ENCODE measurements at regions of chr4 and their contacts with region 1.

Region 1: GRCh38 chr4:142846729-142847596 is 862 bp upstream of the INPP4B start:
- DNase-seq: peak; percentile 39 to 81 (median 75)
- ATAC-seq: peak; percentile 89
- H3K4me3 ChIP-seq: peak overlapping the region; percentile 86
- H3K4me3 Mint-ChIP-seq: peak overlapping the region; percentile 85 to 94 (median 92)
- H3K27ac ChIP-seq: peak overlapping the region; percentile 54
- H3K27ac Mint-ChIP-seq: peak overlapping the region in 5 of 9 donors; percentile 26 to 76 (median 56)
- H3K4me1 ChIP-seq: peaks cover 5 to 7% of the 10 kb centered on the region in 2 donors
- H3K4me1 Mint-ChIP-seq: peaks cover 10 to 28% (median 16%) of the 10 kb centered on the region in 7 donors
- H3K27me3 ChIP-seq: peaks cover 0 to 4% of the 10 kb centered on the region in 2 donors
- H3K27me3 Mint-ChIP-seq: peaks cover 5 to 26% (median 22%) of the 10 kb centered on the region in 5 donors

Region 2: GRCh38 chr4:141158219-141158618 is 1688.7 kb before region 1 on chr4:
- CTCF ChIA-PET with region 1: no interaction called
- POLR2A ChIA-PET with region 1: no interaction called
- intact Hi-C with region 1: loop called in 1 of 2 experiments (anchors 2 kb)
- DNase-seq: peak in 1 of 9 donors; percentile 11
- ATAC-seq: no peak
- H3K4me3 ChIP-seq: no peak overlapping the region
- H3K4me3 Mint-ChIP-seq: no peak overlapping the region
- H3K27ac ChIP-seq: no peak overlapping the region
- H3K27ac Mint-ChIP-seq: no peak overlapping the region
- H3K4me1 ChIP-seq: no peaks in the 10 kb centered on the region
- H3K4me1 Mint-ChIP-seq: no peaks in the 10 kb centered on the region
- H3K27me3 ChIP-seq: no peaks in the 10 kb centered on the region
- H3K27me3 Mint-ChIP-seq: peaks cover 5 to 20% (median 13%) of the 10 kb centered on the region in 5 donors

Region 3: DNA sequence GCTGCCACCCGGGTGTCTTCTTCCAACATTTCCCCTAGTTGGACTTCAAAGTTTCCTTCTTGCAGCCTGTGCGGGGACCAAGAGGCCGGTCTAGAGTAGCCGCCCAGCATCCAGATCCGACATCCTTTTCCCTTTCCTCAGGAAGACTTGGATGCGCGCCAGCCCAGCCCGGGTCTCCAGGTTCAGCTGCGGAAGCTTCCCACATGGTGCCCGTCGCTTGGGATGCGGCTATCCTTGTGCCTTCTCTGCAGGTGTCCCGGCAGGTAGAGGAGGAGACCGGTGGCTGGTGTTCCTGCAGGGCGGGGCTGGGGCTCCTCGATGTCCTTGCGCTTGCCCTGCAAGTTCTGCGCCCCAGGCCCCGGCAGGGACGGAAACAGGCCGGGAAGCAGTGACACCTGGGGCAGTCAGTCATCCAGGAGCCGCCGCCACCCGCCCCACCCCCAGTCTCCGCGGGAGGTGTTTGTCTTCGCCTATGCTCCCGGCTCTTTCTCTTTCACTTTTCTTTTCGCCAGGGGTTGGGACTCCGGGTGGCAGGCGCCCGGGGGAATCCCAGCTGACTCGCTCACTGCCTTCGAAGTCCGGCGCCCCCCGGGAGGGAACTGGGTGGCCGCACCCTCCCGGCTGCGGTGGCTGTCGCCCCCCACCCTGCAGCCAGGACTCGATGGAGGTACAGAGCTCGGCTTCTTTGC is 1210.7 kb before region 1 on chr4 and contains the start of gene IL15:
- CTCF ChIA-PET with region 1: no interaction called
- POLR2A ChIA-PET with region 1: no interaction called
- intact Hi-C with region 1: loop called (anchors 5 kb)
- DNase-seq: peak; percentile 4 to 70 (median 20)
- ATAC-seq: peak; percentile 82
- H3K4me3 ChIP-seq: peak within 1 kb of the TSS; percentile 80
- H3K4me3 Mint-ChIP-seq: peak within 1 kb of the TSS; percentile 80 to 98 (median 95)
- H3K27ac ChIP-seq: peak within 1 kb of the TSS; percentile 40
- H3K27ac Mint-ChIP-seq: peak within 1 kb of the TSS in 7 of 9 donors; percentile 7 to 85 (median 69)
- H3K4me1 ChIP-seq: peaks cover 2 to 10% of the 10 kb centered on the region in 2 donors
- H3K4me1 Mint-ChIP-seq: peaks cover 8 to 25% (median 16%) of the 10 kb centered on the region in 7 donors
- H3K27me3 ChIP-seq: no peaks in the 10 kb centered on the region
- H3K27me3 Mint-ChIP-seq: peaks cover 7 to 52% (median 14%) of the 10 kb centered on the region in 5 donors
- total RNA-seq, gene IL15: 0.54 to 8.7 (median 2.7) TPM

Region 4: DNA sequence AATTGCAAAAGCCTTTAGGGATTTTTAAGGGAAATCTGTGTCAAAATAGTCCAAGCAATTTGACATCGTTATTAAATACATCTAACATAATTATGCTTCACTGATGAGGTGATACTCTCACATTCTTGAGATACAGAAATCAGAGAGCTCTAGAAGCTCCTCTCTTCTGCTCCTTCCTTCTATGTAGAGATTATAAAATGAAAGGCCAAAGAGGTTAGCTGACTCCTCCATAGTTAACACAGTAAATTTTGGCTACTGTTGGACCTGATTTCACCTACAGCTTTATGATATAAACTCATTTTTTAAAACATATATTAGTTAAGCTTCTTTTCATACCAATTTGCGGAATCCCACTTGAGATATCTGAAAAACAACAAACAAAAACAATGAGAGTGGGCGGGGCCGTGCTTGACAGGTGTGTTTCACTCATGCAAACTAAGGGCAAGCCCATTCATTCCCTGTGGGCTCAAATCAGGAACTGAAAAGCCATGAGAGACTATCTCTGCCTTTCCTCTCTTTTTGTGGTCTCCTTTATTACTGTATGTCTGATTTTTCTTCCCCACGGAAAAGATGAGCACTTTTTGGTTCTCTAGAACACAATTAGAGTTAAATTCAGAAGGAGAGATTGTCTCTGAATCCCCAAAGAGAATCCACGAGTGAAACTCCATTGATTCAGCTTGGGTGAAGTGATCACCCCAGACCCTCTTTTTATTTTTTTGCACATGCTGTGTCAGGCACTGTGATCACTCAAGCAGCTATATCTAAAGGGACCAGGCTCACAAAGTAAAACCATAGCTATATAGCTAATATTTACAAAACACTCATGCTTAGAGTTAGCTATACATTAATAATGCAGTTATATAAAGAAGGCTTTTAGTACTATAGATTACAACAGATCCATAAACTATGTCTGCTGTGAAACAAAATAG is 644.3 kb before region 1 on chr4:
- CTCF ChIA-PET with region 1: no interaction called
- POLR2A ChIA-PET with region 1: no interaction called
- intact Hi-C with region 1: loop called in 1 of 2 experiments (anchors 10 kb)
- DNase-seq: no peak
- ATAC-seq: no peak
- H3K4me3 ChIP-seq: no peak overlapping the region
- H3K4me3 Mint-ChIP-seq: no peak overlapping the region
- H3K27ac ChIP-seq: no peak overlapping the region
- H3K27ac Mint-ChIP-seq: peak overlapping the region in 2 of 9 donors; percentile 27 to 61
- H3K4me1 ChIP-seq: no peaks in the 10 kb centered on the region
- H3K4me1 Mint-ChIP-seq: peaks cover 0 to 48% (median 32%) of the 10 kb centered on the region in 7 donors
- H3K27me3 ChIP-seq: no peaks in the 10 kb centered on the region
- H3K27me3 Mint-ChIP-seq: no peaks in the 10 kb centered on the region

Region 5: GRCh38 chr4:142719854-142720541 is 127.0 kb before region 1 on chr4:
- CTCF ChIA-PET with region 1: no interaction called
- POLR2A ChIA-PET with region 1: interaction called, 4 read pairs
- intact Hi-C with region 1: loop called (anchors 2 kb)
- DNase-seq: peak in 6 of 9 donors; percentile 22 to 64 (median 58)
- ATAC-seq: peak; percentile 75
- H3K4me3 ChIP-seq: no peak overlapping the region
- H3K4me3 Mint-ChIP-seq: peak overlapping the region in 6 of 10 donors; percentile 16 to 51 (median 37)
- H3K27ac ChIP-seq: peak overlapping the region; percentile 43
- H3K27ac Mint-ChIP-seq: peak overlapping the region in 6 of 9 donors; percentile 43 to 91 (median 68)
- H3K4me1 ChIP-seq: peaks cover 0 to 10% of the 10 kb centered on the region in 2 donors
- H3K4me1 Mint-ChIP-seq: peaks cover 3 to 49% (median 30%) of the 10 kb centered on the region in 7 donors
- H3K27me3 ChIP-seq: no peaks in the 10 kb centered on the region
- H3K27me3 Mint-ChIP-seq: no peaks in the 10 kb centered on the region

Region 6: GRCh38 chr4:142983065-142983464 is 136.1 kb after region 1 on chr4:
- CTCF ChIA-PET with region 1: no interaction called
- POLR2A ChIA-PET with region 1: no interaction called
- intact Hi-C with region 1: no loop called
- DNase-seq: no peak
- ATAC-seq: no peak
- H3K4me3 ChIP-seq: no peak overlapping the region
- H3K4me3 Mint-ChIP-seq: no peak overlapping the region
- H3K27ac ChIP-seq: no peak overlapping the region
- H3K27ac Mint-ChIP-seq: no peak overlapping the region
- H3K4me1 ChIP-seq: no peaks in the 10 kb centered on the region
- H3K4me1 Mint-ChIP-seq: no peaks in the 10 kb centered on the region
- H3K27me3 ChIP-seq: peaks cover 0 to 2% of the 10 kb centered on the region in 2 donors
- H3K27me3 Mint-ChIP-seq: peaks cover 6 to 17% (median 11%) of the 10 kb centered on the region in 5 donors

Measured in naive thymus-derived CD4-positive, alpha-beta T cell (primary cell).